ENCODE measurements at regions of chr11 and their contacts with region 1.

Region 1: GRCh38 chr11:57920971-57921370 is 102.7 kb upstream of the OR9Q1 start:
- DNase-seq: no peak
- H3K4me3 ChIP-seq: no peak overlapping the region
- H3K27ac ChIP-seq: no peak overlapping the region
- H3K27me3 ChIP-seq: no peaks in the 10 kb centered on the region
- CTCF ChIP-seq: no peak

Region 2: DNA sequence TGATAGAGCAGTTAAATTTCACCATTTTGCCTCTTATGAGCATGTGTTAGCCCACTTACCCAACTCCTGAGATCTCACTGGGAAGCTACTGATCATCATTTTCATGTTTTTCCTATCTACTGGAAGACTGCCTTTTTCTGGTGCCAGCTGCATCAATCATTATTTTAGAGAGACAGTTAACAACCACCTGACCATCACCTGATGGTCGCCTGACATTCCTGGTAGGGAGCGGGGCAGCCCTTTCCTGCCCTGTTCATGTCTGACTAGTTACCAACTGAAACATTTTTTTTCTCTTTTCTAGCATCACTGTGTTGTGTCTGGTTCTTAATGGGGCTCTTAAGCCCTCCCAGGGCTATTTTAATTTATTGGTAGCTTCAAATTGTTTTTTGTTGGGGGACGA is 1768.0 kb after region 1 on chr11:
- CTCF ChIA-PET with region 1: no interaction called
- POLR2A ChIA-PET with region 1: interaction called, 12 read pairs
- DNase-seq: no peak
- H3K4me3 ChIP-seq: no peak overlapping the region
- H3K27ac ChIP-seq: no peak overlapping the region
- H3K27me3 ChIP-seq: peaks cover 5% of the 10 kb centered on the region
- CTCF ChIP-seq: no peak